AG04450 (cell line): ENCODE measurements at regions of chr19 and their contacts with region 1.

Region 1: GRCh38 chr19:51503286-51503817 is 1.8 kb upstream of the SIGLEC12 start:
- DNase-seq: no peak
- H3K4me3 ChIP-seq: no peak overlapping the region
- H3K27ac ChIP-seq: no peak overlapping the region
- H3K27me3 ChIP-seq: no peaks in the 10 kb centered on the region
- CTCF ChIP-seq: no peak

Region 2: GRCh38 chr19:51514866-51515481 is 11.6 kb after region 1 on chr19:
- CTCF ChIA-PET with region 1: interaction called, 12 read pairs
- POLR2A ChIA-PET with region 1: no interaction called
- DNase-seq: peak; percentile 7
- H3K4me3 ChIP-seq: no peak overlapping the region
- H3K27ac ChIP-seq: no peak overlapping the region
- H3K27me3 ChIP-seq: no peaks in the 10 kb centered on the region
- CTCF ChIP-seq: peak; percentile 76

Region 3: GRCh38 chr19:51525686-51526085 is 22.3 kb after region 1 on chr19:
- CTCF ChIA-PET with region 1: no interaction called
- POLR2A ChIA-PET with region 1: no interaction called
- DNase-seq: no peak
- H3K4me3 ChIP-seq: no peak overlapping the region
- H3K27ac ChIP-seq: no peak overlapping the region
- H3K27me3 ChIP-seq: no peaks in the 10 kb centered on the region
- CTCF ChIP-seq: no peak

Region 4: GRCh38 chr19:51607920-51608562 is 104.7 kb after region 1 on chr19:
- CTCF ChIA-PET with region 1: no interaction called
- POLR2A ChIA-PET with region 1: no interaction called
- DNase-seq: peak; percentile 38
- H3K4me3 ChIP-seq: no peak overlapping the region
- H3K27ac ChIP-seq: no peak overlapping the region
- H3K27me3 ChIP-seq: peaks cover 4% of the 10 kb centered on the region
- CTCF ChIP-seq: peak; percentile 84